ENCODE measurements at regions of chr22 and their contacts with region 1.

Region 1: GRCh38 chr22:46006379-46007002 is 29.5 kb upstream of the WNT7B start:
- DNase-seq: no peak
- ATAC-seq: peak; percentile 97
- H3K4me3 ChIP-seq: no peak overlapping the region
- H3K27ac ChIP-seq: no peak overlapping the region
- H3K4me1 ChIP-seq: no peaks in the 10 kb centered on the region
- H3K27me3 ChIP-seq: no peaks in the 10 kb centered on the region
- CTCF ChIP-seq: peak; percentile 78 to 90 (median 88)
- EP300 ChIP-seq: no peak
- POLR2A ChIP-seq: no peak
- RAD21 ChIP-seq: peak; percentile 80

Region 2: DNA sequence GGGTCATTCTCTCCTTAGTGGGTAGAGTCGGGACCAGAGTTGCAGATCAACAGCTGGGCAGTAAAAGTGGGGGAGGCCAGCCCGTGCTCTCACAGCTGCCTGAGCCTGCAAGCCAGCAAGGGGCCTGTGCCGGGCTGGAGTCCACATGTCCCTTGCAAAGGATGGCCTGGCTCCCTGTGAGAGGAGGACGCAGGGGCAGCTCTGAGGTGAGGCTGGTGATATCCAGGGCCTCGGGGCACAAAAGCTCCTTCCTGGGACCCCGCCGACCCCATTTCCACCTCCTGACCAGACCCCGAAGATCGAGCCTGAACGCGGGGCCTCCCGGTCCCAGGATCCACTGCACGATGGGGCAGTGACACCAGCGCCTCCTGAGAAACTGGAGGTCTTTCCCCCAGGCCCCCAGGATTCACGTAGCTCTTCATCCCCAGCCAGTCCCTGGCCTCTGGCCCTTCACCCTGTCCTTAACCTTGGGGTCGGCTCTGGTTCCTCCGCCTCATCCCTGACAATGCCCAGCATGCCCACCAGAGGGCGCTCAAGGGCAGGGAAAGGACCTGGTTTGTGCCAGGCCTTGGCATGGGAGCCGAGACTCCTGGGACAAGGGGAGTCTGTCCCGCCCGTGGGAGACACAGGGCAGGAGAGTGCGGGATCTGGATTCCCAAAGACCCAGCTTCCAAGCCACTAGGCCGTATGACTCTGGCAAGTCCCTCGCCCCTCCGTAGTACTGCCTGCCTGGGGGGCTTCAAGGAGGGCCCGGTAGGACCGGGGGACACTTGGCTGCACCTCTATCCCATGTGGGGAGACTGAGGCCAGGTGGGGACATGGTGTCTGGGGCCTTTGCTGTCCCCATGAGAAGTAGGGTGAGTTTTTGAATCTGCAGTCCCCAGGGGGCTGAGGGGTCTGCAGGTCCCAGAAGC is 11.7 kb before region 1 on chr22:
- CTCF ChIA-PET with region 1: interaction called, 29 read pairs
- POLR2A ChIA-PET with region 1: interaction called, 5 read pairs
- RAD21 ChIA-PET with region 1: interaction called, 33 read pairs
- SMC1A ChIA-PET with region 1: interaction called, 13 read pairs
- in situ Hi-C with region 1: no loop called
- intact Hi-C with region 1: no loop called
- DNase-seq: no peak
- ATAC-seq: peak; percentile 73
- H3K4me3 ChIP-seq: no peak overlapping the region
- H3K27ac ChIP-seq: no peak overlapping the region
- H3K4me1 ChIP-seq: peaks cover 11% of the 10 kb centered on the region
- H3K27me3 ChIP-seq: peaks cover 0 to 3% of the 10 kb centered on the region in 2 experiments; a peak in 1 of 4 replicates
- CTCF ChIP-seq: peak; percentile 97 to 98 (median 97)
- EP300 ChIP-seq: no peak
- POLR2A ChIP-seq: no peak
- RAD21 ChIP-seq: peak; percentile 95

Region 3: DNA sequence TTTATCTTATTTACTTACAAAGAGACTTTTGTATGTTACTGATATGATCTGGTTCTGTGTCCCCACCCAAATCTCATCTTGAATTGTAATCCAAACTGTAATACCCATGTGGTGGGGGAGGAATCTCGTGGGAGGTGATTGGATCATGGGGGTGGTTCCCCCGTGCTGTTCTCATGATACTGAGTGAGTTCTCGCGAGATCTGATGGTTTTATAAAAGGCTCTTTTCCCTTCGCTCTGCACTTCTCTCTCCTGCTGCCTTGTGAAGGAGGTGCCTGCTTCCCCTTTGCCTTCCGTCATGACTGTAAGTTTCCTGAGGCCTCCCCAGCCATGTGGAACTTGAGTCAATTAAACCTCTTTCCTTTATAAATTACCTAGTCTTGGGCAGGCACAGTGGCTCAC is 12.9 kb after region 1 on chr22:
- CTCF ChIA-PET with region 1: interaction called, 29 read pairs
- POLR2A ChIA-PET with region 1: no interaction called
- RAD21 ChIA-PET with region 1: interaction called, 9 read pairs
- SMC1A ChIA-PET with region 1: interaction called, 13 read pairs
- in situ Hi-C with region 1: no loop called
- intact Hi-C with region 1: no loop called
- DNase-seq: no peak
- ATAC-seq: no peak
- H3K4me3 ChIP-seq: no peak overlapping the region
- H3K27ac ChIP-seq: no peak overlapping the region
- H3K4me1 ChIP-seq: no peaks in the 10 kb centered on the region
- H3K27me3 ChIP-seq: no peaks in the 10 kb centered on the region; a peak in 3 of 4 replicates
- CTCF ChIP-seq: no peak
- EP300 ChIP-seq: no peak
- POLR2A ChIP-seq: no peak
- RAD21 ChIP-seq: no peak

Region 4: GRCh38 chr22:46108564-46109473 is 102.3 kb after region 1 on chr22:
- CTCF ChIA-PET with region 1: interaction called, 109 read pairs
- POLR2A ChIA-PET with region 1: no interaction called
- RAD21 ChIA-PET with region 1: interaction called, 88 read pairs
- SMC1A ChIA-PET with region 1: no interaction called
- in situ Hi-C with region 1: no loop called
- intact Hi-C with region 1: no loop called
- DNase-seq: no peak
- ATAC-seq: peak; percentile 43
- H3K4me3 ChIP-seq: no peak overlapping the region
- H3K27ac ChIP-seq: no peak overlapping the region
- H3K4me1 ChIP-seq: no peaks in the 10 kb centered on the region
- H3K27me3 ChIP-seq: no peaks in the 10 kb centered on the region
- CTCF ChIP-seq: no peak
- EP300 ChIP-seq: no peak
- POLR2A ChIP-seq: no peak
- RAD21 ChIP-seq: no peak

Region 5: DNA sequence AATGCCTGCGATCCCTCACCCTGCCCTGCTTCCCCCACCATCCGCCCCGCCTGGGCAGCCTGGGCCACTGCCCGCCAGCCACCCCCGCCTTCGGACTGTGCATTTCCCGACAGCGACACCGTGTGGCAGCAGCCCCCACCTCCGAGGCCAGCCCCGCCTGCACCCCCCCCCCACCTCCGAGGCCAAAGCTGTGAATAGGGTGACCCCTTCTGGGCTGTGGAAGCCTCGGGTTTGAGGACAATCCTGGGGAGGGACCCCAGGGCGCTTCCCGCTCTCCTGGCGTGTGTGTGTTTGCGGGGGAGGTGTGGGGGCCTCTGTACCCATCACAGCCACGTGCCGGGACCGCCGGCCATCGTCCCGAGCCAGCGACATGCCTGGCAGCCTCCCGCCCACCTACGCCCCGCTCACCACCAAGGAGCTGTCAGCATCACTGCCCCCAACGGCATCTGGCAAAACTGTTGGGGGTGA is 110.0 kb after region 1 on chr22:
- CTCF ChIA-PET with region 1: interaction called, 109 read pairs
- POLR2A ChIA-PET with region 1: interaction called, 4 read pairs
- RAD21 ChIA-PET with region 1: interaction called, 88 read pairs
- SMC1A ChIA-PET with region 1: interaction called, 23 read pairs
- in situ Hi-C with region 1: loop called (anchors 5 kb)
- intact Hi-C with region 1: loop called (anchors 1 kb)
- DNase-seq: peak; percentile 16
- ATAC-seq: peak; percentile 97
- H3K4me3 ChIP-seq: no peak overlapping the region
- H3K27ac ChIP-seq: no peak overlapping the region
- H3K4me1 ChIP-seq: no peaks in the 10 kb centered on the region
- H3K27me3 ChIP-seq: no peaks in the 10 kb centered on the region; a peak in 1 of 4 replicates
- CTCF ChIP-seq: peak; percentile 90 to 98 (median 94)
- EP300 ChIP-seq: no peak
- POLR2A ChIP-seq: no peak
- RAD21 ChIP-seq: peak; percentile 98

Region 6: DNA sequence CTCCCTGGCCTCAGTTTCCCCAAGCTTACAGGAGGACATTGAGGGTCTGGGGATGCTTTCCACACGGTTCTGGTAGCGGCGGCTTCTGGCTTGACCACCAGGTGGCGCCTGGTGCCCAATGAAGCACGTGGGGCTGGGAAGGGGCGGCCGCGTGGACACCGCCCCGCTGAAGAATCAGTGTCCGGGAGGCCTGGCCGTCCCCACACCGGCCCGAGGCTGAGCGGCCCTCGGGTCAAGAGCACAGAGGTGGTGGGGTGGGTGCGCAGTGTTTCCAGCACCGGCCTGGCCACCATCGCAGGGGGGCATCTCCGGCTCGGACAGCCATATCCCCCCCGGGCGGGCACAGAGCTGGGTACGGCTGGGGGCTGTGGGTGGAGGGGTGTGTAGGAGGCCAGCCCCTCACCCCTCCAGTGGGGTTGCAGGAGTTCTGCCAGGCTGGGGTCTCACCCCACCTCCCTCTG is 116.0 kb after region 1 on chr22:
- CTCF ChIA-PET with region 1: interaction called, 109 read pairs
- POLR2A ChIA-PET with region 1: no interaction called
- RAD21 ChIA-PET with region 1: interaction called, 88 read pairs
- SMC1A ChIA-PET with region 1: interaction called, 23 read pairs
- in situ Hi-C with region 1: loop called (anchors 5 kb)
- intact Hi-C with region 1: no loop called
- DNase-seq: no peak
- ATAC-seq: peak; percentile 89
- H3K4me3 ChIP-seq: no peak overlapping the region
- H3K27ac ChIP-seq: no peak overlapping the region
- H3K4me1 ChIP-seq: no peaks in the 10 kb centered on the region
- H3K27me3 ChIP-seq: no peaks in the 10 kb centered on the region; a peak in 1 of 4 replicates
- CTCF ChIP-seq: peak; percentile 81 to 95 (median 87); a peak in 5 of 6 replicates
- EP300 ChIP-seq: no peak
- POLR2A ChIP-seq: no peak
- RAD21 ChIP-seq: peak; percentile 77

Measured in GM12878 (cell line).